CD8-positive, alpha-beta memory T cell (primary cell): ENCODE measurements at regions of chr2 and their contacts with region 1.

Region 1: DNA sequence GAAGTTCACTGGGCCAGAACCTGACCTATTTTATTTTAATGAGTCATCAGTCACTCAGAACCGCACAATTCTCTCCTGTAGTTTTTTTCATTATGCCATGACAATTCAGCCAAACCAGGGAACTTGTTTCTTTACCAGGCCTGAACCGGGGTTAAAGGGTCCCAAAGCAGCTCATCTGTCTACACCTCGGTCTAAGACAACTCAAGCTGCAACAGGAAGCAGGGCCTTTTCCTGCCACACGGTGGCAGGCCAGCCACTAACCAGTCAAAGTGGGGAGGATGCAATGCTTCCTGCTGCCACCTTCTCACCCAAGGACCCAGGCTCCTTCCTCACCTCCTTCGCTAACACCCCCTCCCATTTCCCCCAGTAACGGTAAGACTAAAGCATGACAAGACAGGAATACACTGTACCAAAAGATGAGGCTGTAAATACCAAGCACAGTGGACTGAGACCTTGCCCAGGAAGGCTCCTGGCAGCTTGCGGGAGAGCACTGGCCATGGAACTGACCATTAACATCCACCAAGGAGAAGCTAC is 56.7 kb upstream of the ACKR3 start:
- DNase-seq: peak; percentile 47 to 81 (median 62)
- H3K4me3 ChIP-seq: no peak overlapping the region
- H3K4me3 Mint-ChIP-seq: no peak overlapping the region
- H3K27ac ChIP-seq: no peak overlapping the region
- H3K27ac Mint-ChIP-seq: no peak overlapping the region
- H3K4me1 ChIP-seq: peaks cover 8% of the 10 kb centered on the region
- H3K4me1 Mint-ChIP-seq: no peaks in the 10 kb centered on the region
- H3K27me3 ChIP-seq: no peaks in the 10 kb centered on the region
- H3K27me3 Mint-ChIP-seq: peaks cover 6 to 14% of the 10 kb centered on the region in 2 donors

Region 2: DNA sequence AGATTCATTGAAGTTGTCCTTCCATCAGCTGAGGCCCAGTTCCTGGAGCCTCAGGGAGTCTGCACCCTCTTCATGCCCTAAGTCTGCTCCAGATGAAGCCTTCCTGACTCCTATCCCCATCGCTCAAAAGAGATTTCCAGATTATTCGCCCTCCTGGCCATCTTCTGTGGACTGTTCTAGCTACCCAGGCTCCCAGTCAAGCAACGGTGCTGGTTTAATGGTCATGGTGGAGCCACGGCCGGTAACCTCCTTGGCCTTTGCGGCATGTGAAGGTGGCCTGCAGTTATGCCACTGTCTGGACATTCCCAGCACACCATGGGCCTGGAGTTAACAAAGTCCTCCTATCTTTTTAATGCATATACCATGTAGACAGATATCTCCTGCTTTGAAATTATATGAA is 108.6 kb before region 1 on chr2:
- CTCF ChIA-PET with region 1: no interaction called
- POLR2A ChIA-PET with region 1: no interaction called
- DNase-seq: no peak
- H3K4me3 ChIP-seq: no peak overlapping the region
- H3K4me3 Mint-ChIP-seq: no peak overlapping the region
- H3K27ac ChIP-seq: no peak overlapping the region
- H3K27ac Mint-ChIP-seq: no peak overlapping the region
- H3K4me1 ChIP-seq: no peaks in the 10 kb centered on the region
- H3K4me1 Mint-ChIP-seq: no peaks in the 10 kb centered on the region
- H3K27me3 ChIP-seq: no peaks in the 10 kb centered on the region
- H3K27me3 Mint-ChIP-seq: peaks cover 4 to 35% of the 10 kb centered on the region in 2 donors

Region 3: DNA sequence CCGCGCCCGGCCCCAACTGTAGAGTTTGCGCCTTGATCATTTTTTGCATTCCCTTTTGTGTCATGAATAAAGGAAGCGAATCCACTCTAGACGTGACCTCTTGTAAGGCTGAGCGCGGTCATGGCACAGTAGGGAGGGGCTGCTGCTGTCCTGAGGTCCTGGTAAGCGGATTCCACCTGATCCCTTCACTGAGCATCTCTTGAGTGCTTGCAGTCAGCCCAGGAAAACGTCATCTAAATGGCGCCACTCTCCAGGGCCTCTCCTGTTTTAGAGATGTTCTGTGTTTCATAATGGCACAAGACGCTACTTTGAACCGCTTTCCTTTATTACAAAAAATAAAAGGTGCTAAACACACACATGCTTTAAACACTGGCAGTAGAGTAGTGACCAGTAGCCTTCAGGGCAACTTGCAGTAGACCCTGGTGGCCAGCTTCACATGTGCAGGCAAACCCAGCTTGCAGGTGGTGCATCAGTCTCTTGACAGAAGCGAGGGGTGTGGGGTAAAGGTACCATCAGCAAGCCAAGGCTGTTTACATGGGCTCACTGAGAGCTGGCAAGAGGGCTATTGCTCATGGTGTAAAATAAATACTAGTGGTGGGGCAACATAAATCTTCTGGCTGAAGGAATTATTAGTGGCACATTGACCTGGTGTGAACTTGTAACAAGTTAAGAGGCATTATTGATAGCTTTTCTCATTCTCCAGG is 13.6 kb after region 1 on chr2:
- CTCF ChIA-PET with region 1: interaction called, 17 read pairs
- POLR2A ChIA-PET with region 1: no interaction called
- DNase-seq: no peak
- H3K4me3 ChIP-seq: no peak overlapping the region
- H3K4me3 Mint-ChIP-seq: no peak overlapping the region
- H3K27ac ChIP-seq: no peak overlapping the region
- H3K27ac Mint-ChIP-seq: no peak overlapping the region
- H3K4me1 ChIP-seq: no peaks in the 10 kb centered on the region
- H3K4me1 Mint-ChIP-seq: peaks cover 0 to 4% (median 0%) of the 10 kb centered on the region in 3 donors
- H3K27me3 ChIP-seq: no peaks in the 10 kb centered on the region
- H3K27me3 Mint-ChIP-seq: peaks cover 9 to 12% of the 10 kb centered on the region in 2 donors

Region 4: GRCh38 chr2:236536727-236537398 is 23.9 kb after region 1 on chr2:
- CTCF ChIA-PET with region 1: interaction called, 43 read pairs
- POLR2A ChIA-PET with region 1: no interaction called
- DNase-seq: peak; percentile 36 to 74 (median 55)
- H3K4me3 ChIP-seq: peak overlapping the region; percentile 81
- H3K4me3 Mint-ChIP-seq: peak overlapping the region; percentile 94 to 100 (median 97)
- H3K27ac ChIP-seq: peak overlapping the region; percentile 43
- H3K27ac Mint-ChIP-seq: peak overlapping the region; percentile 87 to 100 (median 97)
- H3K4me1 ChIP-seq: peaks cover 27% of the 10 kb centered on the region
- H3K4me1 Mint-ChIP-seq: peaks cover 52 to 70% (median 65%) of the 10 kb centered on the region in 3 donors
- H3K27me3 ChIP-seq: no peaks in the 10 kb centered on the region
- H3K27me3 Mint-ChIP-seq: no peaks in the 10 kb centered on the region

Region 5: DNA sequence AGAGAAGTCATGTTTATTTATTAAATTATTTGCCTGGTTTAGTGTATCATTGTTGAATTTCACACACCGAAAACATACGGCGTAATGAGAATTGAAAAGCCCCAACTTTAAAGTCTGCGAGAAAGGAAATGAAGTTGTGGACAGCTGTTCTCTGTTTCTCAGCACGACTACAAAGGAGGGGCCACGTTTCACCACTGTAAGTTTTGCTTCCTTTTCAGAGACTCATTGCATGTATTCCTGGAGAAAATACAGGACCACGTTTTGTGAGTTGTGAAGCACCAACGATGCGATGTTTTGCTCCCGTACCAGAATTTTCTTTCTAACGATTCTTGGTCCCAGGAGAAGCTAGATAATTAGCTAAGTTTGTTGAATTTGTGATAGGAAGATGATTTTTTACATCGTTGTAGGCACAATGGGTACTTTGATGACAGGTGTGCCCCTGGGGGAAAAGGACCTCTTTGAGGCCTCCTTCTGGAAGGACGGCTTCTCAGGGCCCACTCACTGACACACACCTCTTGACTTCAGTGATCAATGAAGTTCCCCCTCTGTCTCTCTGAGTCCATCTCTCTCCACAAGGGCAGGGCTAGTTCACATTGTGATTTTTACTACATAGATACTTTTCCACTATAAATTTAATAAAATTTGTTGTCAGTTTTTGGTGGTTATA is 33.0 kb after region 1 on chr2:
- CTCF ChIA-PET with region 1: interaction called, 23 read pairs
- POLR2A ChIA-PET with region 1: no interaction called
- DNase-seq: peak in 2 of 5 donors; percentile 16 to 42
- H3K4me3 ChIP-seq: peak overlapping the region; percentile 57
- H3K4me3 Mint-ChIP-seq: peak overlapping the region; percentile 49 to 86 (median 71)
- H3K27ac ChIP-seq: peak overlapping the region; percentile 46
- H3K27ac Mint-ChIP-seq: peak overlapping the region; percentile 87 to 94 (median 90)
- H3K4me1 ChIP-seq: peaks cover 72% of the 10 kb centered on the region
- H3K4me1 Mint-ChIP-seq: peaks cover 87 to 95% (median 95%) of the 10 kb centered on the region in 3 donors
- H3K27me3 ChIP-seq: no peaks in the 10 kb centered on the region
- H3K27me3 Mint-ChIP-seq: no peaks in the 10 kb centered on the region

Region 6: GRCh38 chr2:236558993-236559978 is 46.3 kb after region 1 on chr2:
- CTCF ChIA-PET with region 1: interaction called, 16 read pairs
- POLR2A ChIA-PET with region 1: no interaction called
- DNase-seq: no peak
- H3K4me3 ChIP-seq: no peak overlapping the region
- H3K4me3 Mint-ChIP-seq: peak overlapping the region in 2 of 7 donors; percentile 0 to 32
- H3K27ac ChIP-seq: no peak overlapping the region
- H3K27ac Mint-ChIP-seq: peak overlapping the region in 6 of 8 donors; percentile 1 to 61 (median 16)
- H3K4me1 ChIP-seq: peaks cover 29% of the 10 kb centered on the region
- H3K4me1 Mint-ChIP-seq: peaks cover 42 to 61% (median 50%) of the 10 kb centered on the region in 3 donors
- H3K27me3 ChIP-seq: no peaks in the 10 kb centered on the region
- H3K27me3 Mint-ChIP-seq: no peaks in the 10 kb centered on the region